PC-9 (cell line): ENCODE measurements at regions of chr3 and their contacts with region 1.

Region 1: GRCh38 chr3:123524981-123525380 is 59.9 kb downstream of the HACD2 start:
- DNase-seq: no peak
- H3K4me3 ChIP-seq: no peak overlapping the region
- H3K27ac ChIP-seq: no peak overlapping the region
- H3K4me1 ChIP-seq: no peaks in the 10 kb centered on the region
- H3K27me3 ChIP-seq: no peaks in the 10 kb centered on the region
- CTCF ChIP-seq: no peak

Region 2: DNA sequence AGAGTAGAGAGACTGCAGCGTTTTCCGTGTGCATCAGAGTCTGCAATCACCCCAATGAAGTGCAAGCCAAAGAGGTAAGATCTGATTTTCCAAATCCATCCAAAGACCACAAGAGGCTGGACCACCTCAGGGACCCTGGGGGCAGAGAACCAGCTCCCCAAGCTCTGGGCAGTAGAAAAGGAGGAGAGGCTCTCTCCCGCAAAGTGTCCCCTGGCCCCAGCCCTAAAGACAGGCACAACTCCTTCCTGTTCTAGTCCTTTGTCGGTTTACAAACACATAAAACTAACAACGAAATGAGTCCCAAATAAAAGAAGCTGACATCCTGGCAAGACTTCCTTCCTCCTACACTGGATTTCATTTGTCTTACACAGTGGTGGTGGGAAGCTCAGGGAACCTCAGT is 165.4 kb before region 1 on chr3:
- CTCF ChIA-PET with region 1: no interaction called
- POLR2A ChIA-PET with region 1: interaction called, 13 read pairs
- intact Hi-C with region 1: no loop called
- DNase-seq: no peak
- H3K4me3 ChIP-seq: no peak overlapping the region
- H3K27ac ChIP-seq: no peak overlapping the region
- H3K4me1 ChIP-seq: no peaks in the 10 kb centered on the region
- H3K27me3 ChIP-seq: no peaks in the 10 kb centered on the region
- CTCF ChIP-seq: no peak

Region 3: DNA sequence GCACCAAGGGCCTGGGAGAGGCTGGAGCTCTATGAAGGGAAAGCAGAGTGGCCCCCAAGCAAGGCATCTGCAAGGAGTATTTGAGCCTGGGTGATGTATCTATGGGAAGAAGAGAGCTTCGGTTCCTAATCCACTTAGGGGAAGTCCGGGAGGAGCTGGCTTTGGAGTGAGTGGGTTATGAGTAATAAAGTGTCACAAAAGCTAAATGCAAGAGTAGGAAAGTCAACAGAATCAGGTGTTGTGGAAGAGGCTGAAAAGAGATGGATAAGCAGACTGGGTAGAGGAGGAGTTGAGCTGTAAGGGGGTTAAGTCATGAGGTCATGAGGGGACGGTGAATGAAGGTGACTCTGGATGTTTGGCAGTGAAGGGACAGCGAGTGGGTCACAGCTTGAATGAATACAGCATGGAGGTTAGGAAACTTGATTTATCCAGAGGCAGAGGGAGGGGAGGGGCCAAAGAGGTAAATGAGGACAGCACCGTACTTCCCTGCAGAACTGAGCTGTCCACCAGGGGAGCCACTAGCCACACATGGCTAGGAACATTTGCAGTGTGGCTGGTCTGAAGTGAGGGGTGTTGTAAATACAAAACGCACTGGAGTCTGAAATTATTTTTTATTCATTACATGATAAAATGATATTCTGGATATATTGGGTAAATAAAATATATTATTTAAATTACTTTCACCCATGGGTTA is 159.4 kb before region 1 on chr3:
- CTCF ChIA-PET with region 1: interaction called, 10 read pairs
- POLR2A ChIA-PET with region 1: no interaction called
- intact Hi-C with region 1: no loop called
- DNase-seq: peak in 1 of 2 experiments; percentile 16
- H3K4me3 ChIP-seq: no peak overlapping the region
- H3K27ac ChIP-seq: no peak overlapping the region
- H3K4me1 ChIP-seq: no peaks in the 10 kb centered on the region
- H3K27me3 ChIP-seq: no peaks in the 10 kb centered on the region
- CTCF ChIP-seq: peak; percentile 46

Region 4: DNA sequence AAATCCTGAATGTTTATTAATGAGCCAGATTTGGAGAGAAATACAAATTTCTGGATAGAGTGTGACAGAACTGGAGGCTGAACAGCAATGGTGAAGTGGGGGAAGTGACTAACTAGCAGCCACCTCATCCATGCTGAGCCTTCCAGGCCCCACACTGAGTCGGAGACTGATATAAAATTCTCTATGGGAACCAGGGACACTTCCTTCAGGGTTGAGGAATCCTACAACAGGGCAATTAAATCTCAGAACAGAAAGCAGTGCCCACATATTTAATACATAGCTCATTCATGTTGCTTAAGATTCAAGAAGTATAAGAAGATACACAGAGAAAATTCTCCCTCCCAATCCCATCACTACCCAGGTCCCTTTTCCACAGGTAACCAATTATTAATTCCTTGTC is 10.6 kb after region 1 on chr3:
- CTCF ChIA-PET with region 1: interaction called, 10 read pairs
- POLR2A ChIA-PET with region 1: no interaction called
- intact Hi-C with region 1: no loop called
- DNase-seq: no peak
- H3K4me3 ChIP-seq: no peak overlapping the region
- H3K27ac ChIP-seq: no peak overlapping the region
- H3K4me1 ChIP-seq: no peaks in the 10 kb centered on the region
- H3K27me3 ChIP-seq: no peaks in the 10 kb centered on the region
- CTCF ChIP-seq: no peak

Region 5: GRCh38 chr3:123584988-123585937 is 60.3 kb after region 1 on chr3 and contains the start of gene HACD2:
- CTCF ChIA-PET with region 1: no interaction called
- POLR2A ChIA-PET with region 1: no interaction called
- intact Hi-C with region 1: no loop called
- DNase-seq: peak; percentile 89 to 98
- H3K4me3 ChIP-seq: peak within 1 kb of the TSS; percentile 72
- H3K27ac ChIP-seq: peak within 1 kb of the TSS; percentile 95
- H3K4me1 ChIP-seq: peaks cover 45% of the 10 kb centered on the region
- H3K27me3 ChIP-seq: no peaks in the 10 kb centered on the region
- CTCF ChIP-seq: no peak
- total RNA-seq, gene HACD2: 38.4 and 53.3 TPM in 2 replicates